A549 (cell line): ENCODE measurements at regions of chr6 and their contacts with region 1.

Region 1: DNA sequence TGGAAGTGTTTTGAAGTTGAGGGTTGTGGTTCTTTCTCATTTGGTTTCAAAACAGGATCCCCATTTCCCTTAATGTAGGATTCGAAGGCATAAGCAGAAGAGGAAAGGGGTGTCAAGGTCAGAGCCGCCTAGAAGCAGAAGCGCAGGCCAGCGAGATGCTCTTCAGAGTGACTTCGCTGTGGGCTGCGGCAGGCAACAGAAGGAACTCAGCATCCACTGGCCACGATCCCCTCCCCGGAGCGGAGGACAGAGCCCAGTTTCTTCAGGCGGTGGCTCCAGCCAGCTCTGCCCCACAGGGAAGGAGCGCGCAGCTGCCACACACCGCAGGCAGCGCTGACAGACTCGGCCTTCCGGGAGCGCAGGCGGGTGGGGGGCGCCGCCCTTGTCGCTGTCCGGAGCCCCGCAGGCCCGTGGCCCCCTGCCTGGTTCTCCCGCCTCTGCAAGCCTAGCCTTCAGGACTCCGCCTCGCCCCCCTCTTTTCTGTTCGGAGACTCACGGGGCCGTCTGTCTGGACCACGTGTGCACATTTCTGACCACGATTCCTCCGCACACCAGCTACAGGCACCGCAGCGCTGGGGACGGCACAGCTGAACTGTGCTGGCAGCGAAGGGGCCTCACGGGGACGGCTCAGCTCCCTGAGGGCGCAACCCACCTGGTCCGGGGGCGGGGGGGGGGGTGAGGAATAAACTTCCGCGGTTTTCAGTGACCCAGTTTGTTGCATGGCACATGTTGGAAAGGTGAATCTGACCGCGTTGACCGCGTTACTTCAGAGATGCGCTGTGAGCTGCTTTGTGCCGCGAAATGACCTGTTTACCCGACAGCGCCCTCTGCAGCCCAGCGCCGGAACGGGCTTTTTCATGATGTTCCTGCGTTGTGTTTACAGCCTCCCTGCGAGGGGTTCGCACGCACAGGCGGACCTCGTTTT is 26.1 kb downstream of the TTLL2 start:
- DNase-seq: peak; percentile 41 to 76
- ATAC-seq: peak; percentile 95 to 97
- H3K4me3 ChIP-seq: peak overlapping the region; percentile 51
- H3K27ac ChIP-seq: peak overlapping the region; percentile 69 to 86; a peak in 5 of 6 replicates
- H3K4me1 ChIP-seq: no peaks in the 10 kb centered on the region
- CTCF ChIP-seq: peak; percentile 70
- EP300 ChIP-seq: no peak
- POLR2A ChIP-seq: no peak
- RAD21 ChIP-seq: peak; percentile 61 to 65

Region 2: GRCh38 chr6:167214206-167214605 is 136.8 kb before region 1 on chr6:
- CTCF ChIA-PET with region 1: interaction called, 12 read pairs
- POLR2A ChIA-PET with region 1: no interaction called
- DNase-seq: no peak
- ATAC-seq: no peak
- H3K4me3 ChIP-seq: no peak overlapping the region
- H3K27ac ChIP-seq: no peak overlapping the region
- H3K4me1 ChIP-seq: peaks cover 3% of the 10 kb centered on the region; the same call in 1 of the 3 replicates
- CTCF ChIP-seq: no peak
- EP300 ChIP-seq: no peak
- POLR2A ChIP-seq: no peak
- RAD21 ChIP-seq: no peak

Region 3: GRCh38 chr6:167291623-167292300 is 59.2 kb before region 1 on chr6:
- CTCF ChIA-PET with region 1: interaction called, 16 read pairs
- POLR2A ChIA-PET with region 1: no interaction called
- DNase-seq: no peak
- ATAC-seq: no peak
- H3K4me3 ChIP-seq: no peak overlapping the region
- H3K27ac ChIP-seq: no peak overlapping the region
- H3K4me1 ChIP-seq: no peaks in the 10 kb centered on the region
- CTCF ChIP-seq: no peak
- EP300 ChIP-seq: no peak
- POLR2A ChIP-seq: no peak
- RAD21 ChIP-seq: no peak